ENCODE measurements at regions of chr2 and their contacts with region 1.

Region 1: DNA sequence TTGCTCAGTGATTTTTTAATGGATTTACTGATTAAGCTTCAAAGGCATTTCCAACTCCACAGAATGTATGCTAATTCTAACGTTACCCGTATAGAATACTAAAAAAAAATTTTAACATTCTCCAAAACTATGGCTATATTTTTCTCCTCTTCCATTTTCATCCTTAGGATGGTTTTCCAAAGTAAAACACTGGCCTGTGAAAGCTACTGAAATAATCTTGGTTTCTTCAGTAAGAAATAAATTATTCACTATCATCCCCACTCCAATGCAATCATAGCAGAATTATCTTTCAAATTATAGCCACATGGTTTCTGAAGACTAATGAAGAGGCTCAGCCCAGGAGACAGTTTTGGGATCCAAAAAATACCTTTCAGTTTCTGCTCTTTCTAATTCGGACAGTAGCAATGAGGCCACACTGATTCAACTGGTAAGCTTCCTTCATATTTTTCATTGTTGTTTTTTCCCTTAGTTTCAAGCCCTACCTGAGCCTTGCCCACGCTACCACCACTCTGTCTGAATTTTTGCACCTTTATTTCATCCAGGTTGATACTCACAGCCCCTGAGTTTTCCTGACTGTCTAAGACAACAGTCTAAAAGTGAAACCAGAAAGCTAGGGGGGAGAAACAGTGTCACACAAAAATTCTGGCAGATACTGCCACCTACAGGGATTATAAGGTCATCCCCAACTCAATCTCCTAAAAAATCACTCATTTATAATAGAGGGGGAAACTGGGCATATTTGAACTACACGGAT is 887.9 kb downstream of the NRXN1 start:
- DNase-seq: peak in 1 of 2 experiments; percentile 37
- H3K4me3 ChIP-seq: peak overlapping the region; percentile 5; the same call in 1 of the 2 replicates
- H3K4me3 Mint-ChIP-seq: peak overlapping the region; percentile 47
- H3K27ac Mint-ChIP-seq: no peak overlapping the region
- H3K4me1 ChIP-seq: no peaks in the 10 kb centered on the region
- H3K4me1 Mint-ChIP-seq: no peaks in the 10 kb centered on the region
- H3K27me3 ChIP-seq: no peaks in the 10 kb centered on the region
- H3K27me3 Mint-ChIP-seq: peaks cover 3% of the 10 kb centered on the region
- CTCF ChIP-seq: peak; percentile 60 to 66

Region 2: GRCh38 chr2:49616800-49617199 is 527.2 kb before region 1 on chr2:
- CTCF ChIA-PET with region 1: interaction called, 3 read pairs
- POLR2A ChIA-PET with region 1: no interaction called
- intact Hi-C with region 1: loop called (anchors 1 kb)
- DNase-seq: peak in 1 of 2 experiments; percentile 42
- H3K4me3 ChIP-seq: no peak overlapping the region
- H3K4me3 Mint-ChIP-seq: no peak overlapping the region
- H3K27ac Mint-ChIP-seq: no peak overlapping the region
- H3K4me1 ChIP-seq: peaks cover 9% of the 10 kb centered on the region
- H3K4me1 Mint-ChIP-seq: no peaks in the 10 kb centered on the region
- H3K27me3 ChIP-seq: no peaks in the 10 kb centered on the region
- H3K27me3 Mint-ChIP-seq: no peaks in the 10 kb centered on the region
- CTCF ChIP-seq: peak; percentile 48 to 67

Region 3: GRCh38 chr2:49687918-49688317 is 456.1 kb before region 1 on chr2:
- CTCF ChIA-PET with region 1: interaction called, 15 read pairs
- POLR2A ChIA-PET with region 1: no interaction called
- intact Hi-C with region 1: loop called (anchors 1 kb)
- DNase-seq: no peak
- H3K4me3 ChIP-seq: no peak overlapping the region
- H3K4me3 Mint-ChIP-seq: no peak overlapping the region
- H3K27ac Mint-ChIP-seq: no peak overlapping the region
- H3K4me1 ChIP-seq: no peaks in the 10 kb centered on the region
- H3K4me1 Mint-ChIP-seq: no peaks in the 10 kb centered on the region
- H3K27me3 ChIP-seq: no peaks in the 10 kb centered on the region
- H3K27me3 Mint-ChIP-seq: peaks cover 3% of the 10 kb centered on the region
- CTCF ChIP-seq: peak in 1 of 2 experiments; percentile 27

Region 4: GRCh38 chr2:49770919-49771318 is 373.1 kb before region 1 on chr2:
- CTCF ChIA-PET with region 1: interaction called, 12 read pairs
- POLR2A ChIA-PET with region 1: no interaction called
- intact Hi-C with region 1: loop called (anchors 1 kb)
- DNase-seq: peak in 1 of 2 experiments; percentile 23
- H3K4me3 ChIP-seq: no peak overlapping the region
- H3K4me3 Mint-ChIP-seq: no peak overlapping the region
- H3K27ac Mint-ChIP-seq: no peak overlapping the region
- H3K4me1 ChIP-seq: no peaks in the 10 kb centered on the region
- H3K4me1 Mint-ChIP-seq: no peaks in the 10 kb centered on the region
- H3K27me3 ChIP-seq: no peaks in the 10 kb centered on the region
- H3K27me3 Mint-ChIP-seq: no peaks in the 10 kb centered on the region
- CTCF ChIP-seq: peak; percentile 29 to 39

Region 5: GRCh38 chr2:50111067-50111466 is 32.9 kb before region 1 on chr2:
- CTCF ChIA-PET with region 1: no interaction called
- POLR2A ChIA-PET with region 1: no interaction called
- intact Hi-C with region 1: no loop called
- DNase-seq: no peak
- H3K4me3 ChIP-seq: no peak overlapping the region
- H3K4me3 Mint-ChIP-seq: no peak overlapping the region
- H3K27ac Mint-ChIP-seq: no peak overlapping the region
- H3K4me1 ChIP-seq: no peaks in the 10 kb centered on the region
- H3K4me1 Mint-ChIP-seq: peaks cover 3% of the 10 kb centered on the region
- H3K27me3 ChIP-seq: no peaks in the 10 kb centered on the region
- H3K27me3 Mint-ChIP-seq: peaks cover 3% of the 10 kb centered on the region
- CTCF ChIP-seq: no peak

Region 6: DNA sequence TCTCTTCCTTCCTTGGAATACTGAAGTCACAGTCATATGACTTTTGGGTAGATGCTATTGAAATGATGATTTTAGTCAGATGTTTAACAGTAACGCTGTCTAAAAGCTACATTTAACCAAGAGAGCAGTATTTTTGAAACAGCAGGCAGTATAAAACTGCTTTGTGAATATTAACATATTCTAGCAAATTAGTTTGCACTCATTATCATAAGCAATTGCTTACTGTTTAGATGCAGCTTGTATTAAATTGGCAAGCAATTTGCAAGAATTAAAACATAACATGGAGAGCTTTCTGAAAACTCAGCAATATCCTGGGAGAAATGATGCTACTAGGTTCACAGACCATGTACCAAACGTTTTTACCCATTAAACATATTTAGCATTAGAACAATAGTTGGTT is 111.9 kb after region 1 on chr2:
- CTCF ChIA-PET with region 1: no interaction called
- POLR2A ChIA-PET with region 1: no interaction called
- intact Hi-C with region 1: no loop called
- DNase-seq: no peak
- H3K4me3 ChIP-seq: no peak overlapping the region
- H3K4me3 Mint-ChIP-seq: no peak overlapping the region
- H3K27ac Mint-ChIP-seq: no peak overlapping the region
- H3K4me1 ChIP-seq: no peaks in the 10 kb centered on the region
- H3K4me1 Mint-ChIP-seq: no peaks in the 10 kb centered on the region
- H3K27me3 ChIP-seq: no peaks in the 10 kb centered on the region
- H3K27me3 Mint-ChIP-seq: peaks cover 2% of the 10 kb centered on the region
- CTCF ChIP-seq: no peak

Region 7: DNA sequence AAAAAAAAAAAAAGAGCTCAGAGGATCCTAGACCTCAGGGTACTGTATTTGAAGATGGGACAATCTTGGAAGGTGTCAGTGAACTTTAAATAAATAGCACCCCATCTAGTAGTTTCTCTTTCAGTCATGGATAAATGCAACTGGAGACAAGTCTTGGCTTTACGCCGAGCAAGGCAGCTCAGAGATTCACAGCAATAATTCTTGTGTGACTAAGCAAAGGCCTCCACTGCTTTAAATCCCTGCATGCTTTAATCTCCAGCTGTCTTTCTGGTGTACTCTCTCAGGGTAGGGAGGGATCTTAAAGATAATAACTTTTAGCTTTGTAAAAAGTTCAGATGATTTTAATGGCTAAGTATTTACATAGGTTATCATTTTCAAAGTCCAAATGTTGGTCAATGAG is 851.6 kb after region 1 on chr2:
- CTCF ChIA-PET with region 1: no interaction called
- POLR2A ChIA-PET with region 1: no interaction called
- intact Hi-C with region 1: no loop called
- DNase-seq: no peak
- H3K4me3 ChIP-seq: no peak overlapping the region
- H3K4me3 Mint-ChIP-seq: no peak overlapping the region
- H3K27ac Mint-ChIP-seq: no peak overlapping the region
- H3K4me1 ChIP-seq: no peaks in the 10 kb centered on the region
- H3K4me1 Mint-ChIP-seq: no peaks in the 10 kb centered on the region
- H3K27me3 ChIP-seq: no peaks in the 10 kb centered on the region
- H3K27me3 Mint-ChIP-seq: peaks cover 2% of the 10 kb centered on the region
- CTCF ChIP-seq: no peak

Measured in Caco-2 (cell line).